Ascending aorta (tissue), 2 donors: ENCODE measurements at regions of chr19 and their contacts with region 1.

Region 1: GRCh38 chr19:1026189-1027019 is at the start of gene CNN2:
- DNase-seq: peak in 1 of 2 donors; percentile 90
- H3K4me3 ChIP-seq: peak within 1 kb of the TSS; percentile 95 to 97
- H3K27ac ChIP-seq: peak within 1 kb of the TSS; percentile 99 to 100
- H3K4me1 ChIP-seq: peaks cover 21 to 34% of the 10 kb centered on the region in 2 donors
- H3K27me3 ChIP-seq: no peaks in the 10 kb centered on the region
- CTCF ChIP-seq: no peak
- total RNA-seq, gene CNN2: 79.1 TPM

Region 2: GRCh38 chr19:1094975-1095701 is 68.7 kb after region 1 on chr19 and contains the start of gene POLR2E:
- intact Hi-C with region 1: loop called (anchors 2 kb)
- DNase-seq: peak; percentile 96 to 99
- H3K4me3 ChIP-seq: peak within 1 kb of the TSS; percentile 81 to 96
- H3K27ac ChIP-seq: peak within 1 kb of the TSS; percentile 42 to 58
- H3K4me1 ChIP-seq: peaks cover 15 to 29% of the 10 kb centered on the region in 2 donors
- H3K27me3 ChIP-seq: no peaks in the 10 kb centered on the region
- CTCF ChIP-seq: no peak
- total RNA-seq, gene POLR2E: 72.1 TPM